PC-9 (cell line): ENCODE measurements at regions of chr7 and their contacts with region 1.

Region 1: DNA sequence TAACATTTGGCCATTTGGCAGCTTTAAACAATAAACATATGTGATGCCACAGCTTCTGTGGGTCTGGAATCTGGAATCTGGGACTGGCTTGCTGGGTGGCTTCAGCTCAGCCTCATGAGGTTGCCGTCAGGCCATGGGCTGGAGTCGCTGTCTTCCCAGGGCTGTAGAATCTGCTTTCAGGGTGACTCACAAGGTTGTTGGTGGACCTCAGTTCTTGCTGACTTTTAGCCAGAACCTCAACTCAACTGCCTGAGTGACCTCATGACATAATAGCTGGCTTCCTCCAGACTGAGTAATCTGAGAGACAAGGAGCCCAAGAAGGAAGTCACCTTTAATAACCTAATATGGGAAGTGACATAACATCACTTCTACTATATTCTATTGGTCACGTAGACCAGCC is 44.6 kb upstream of the TSPAN13 start:
- DNase-seq: peak; percentile 73 to 93
- H3K4me3 ChIP-seq: no peak overlapping the region
- H3K27ac ChIP-seq: peak overlapping the region; percentile 9
- H3K4me1 ChIP-seq: peaks cover 10% of the 10 kb centered on the region
- H3K27me3 ChIP-seq: no peaks in the 10 kb centered on the region
- CTCF ChIP-seq: no peak

Region 2: GRCh38 chr7:16719699-16720098 is 10.7 kb after region 1 on chr7:
- CTCF ChIA-PET with region 1: no interaction called
- POLR2A ChIA-PET with region 1: no interaction called
- intact Hi-C with region 1: loop called (anchors 1 kb)
- DNase-seq: no peak
- H3K4me3 ChIP-seq: no peak overlapping the region
- H3K27ac ChIP-seq: peak overlapping the region; percentile 68
- H3K4me1 ChIP-seq: peaks cover 22% of the 10 kb centered on the region
- H3K27me3 ChIP-seq: no peaks in the 10 kb centered on the region
- CTCF ChIP-seq: no peak

Region 3: GRCh38 chr7:16753102-16753931 is 44.3 kb after region 1 on chr7 and contains the start of gene TSPAN13:
- CTCF ChIA-PET with region 1: no interaction called
- POLR2A ChIA-PET with region 1: no interaction called
- intact Hi-C with region 1: loop called (anchors 2 kb)
- DNase-seq: peak; percentile 97 to 99
- H3K4me3 ChIP-seq: peak within 1 kb of the TSS; percentile 65
- H3K27ac ChIP-seq: peak within 1 kb of the TSS; percentile 60
- H3K4me1 ChIP-seq: peaks cover 28% of the 10 kb centered on the region
- H3K27me3 ChIP-seq: no peaks in the 10 kb centered on the region
- CTCF ChIP-seq: no peak
- total RNA-seq, gene TSPAN13: 26.5 and 31.1 TPM in 2 replicates

Region 4: DNA sequence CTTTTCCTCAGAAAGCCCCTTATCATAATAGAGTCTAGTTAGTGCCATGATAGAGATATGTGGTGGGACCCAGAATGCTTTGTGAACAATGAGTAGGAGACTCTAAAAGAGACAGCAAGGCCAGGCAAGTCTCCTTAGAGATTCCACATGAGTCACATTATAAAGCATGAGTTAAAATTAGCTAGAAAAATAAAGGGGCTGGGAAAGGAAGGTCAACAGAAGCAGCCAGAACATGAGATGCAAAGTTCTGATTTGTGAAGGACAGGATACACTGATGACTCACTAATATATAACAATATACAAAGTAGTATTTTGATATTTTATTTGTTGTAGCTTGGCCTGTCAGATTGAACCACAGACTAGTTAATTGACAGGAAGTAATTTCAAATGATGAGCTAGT is 1256.6 kb after region 1 on chr7:
- CTCF ChIA-PET with region 1: no interaction called
- POLR2A ChIA-PET with region 1: interaction called, 19 read pairs
- intact Hi-C with region 1: no loop called
- DNase-seq: peak in 1 of 2 experiments; percentile 32
- H3K4me3 ChIP-seq: no peak overlapping the region
- H3K27ac ChIP-seq: no peak overlapping the region
- H3K4me1 ChIP-seq: 0 out of 2 replicates have a peak, but pooled peaks cover 7% of the 10 kb centered on the region
- H3K27me3 ChIP-seq: no peaks in the 10 kb centered on the region
- CTCF ChIP-seq: no peak